Activated CD4-positive, alpha-beta T cell treated with anti-CD3 and anti-CD28 coated beads for 36 hours (primary cell): ENCODE measurements at regions of chr10 and their contacts with region 1.

Region 1: DNA sequence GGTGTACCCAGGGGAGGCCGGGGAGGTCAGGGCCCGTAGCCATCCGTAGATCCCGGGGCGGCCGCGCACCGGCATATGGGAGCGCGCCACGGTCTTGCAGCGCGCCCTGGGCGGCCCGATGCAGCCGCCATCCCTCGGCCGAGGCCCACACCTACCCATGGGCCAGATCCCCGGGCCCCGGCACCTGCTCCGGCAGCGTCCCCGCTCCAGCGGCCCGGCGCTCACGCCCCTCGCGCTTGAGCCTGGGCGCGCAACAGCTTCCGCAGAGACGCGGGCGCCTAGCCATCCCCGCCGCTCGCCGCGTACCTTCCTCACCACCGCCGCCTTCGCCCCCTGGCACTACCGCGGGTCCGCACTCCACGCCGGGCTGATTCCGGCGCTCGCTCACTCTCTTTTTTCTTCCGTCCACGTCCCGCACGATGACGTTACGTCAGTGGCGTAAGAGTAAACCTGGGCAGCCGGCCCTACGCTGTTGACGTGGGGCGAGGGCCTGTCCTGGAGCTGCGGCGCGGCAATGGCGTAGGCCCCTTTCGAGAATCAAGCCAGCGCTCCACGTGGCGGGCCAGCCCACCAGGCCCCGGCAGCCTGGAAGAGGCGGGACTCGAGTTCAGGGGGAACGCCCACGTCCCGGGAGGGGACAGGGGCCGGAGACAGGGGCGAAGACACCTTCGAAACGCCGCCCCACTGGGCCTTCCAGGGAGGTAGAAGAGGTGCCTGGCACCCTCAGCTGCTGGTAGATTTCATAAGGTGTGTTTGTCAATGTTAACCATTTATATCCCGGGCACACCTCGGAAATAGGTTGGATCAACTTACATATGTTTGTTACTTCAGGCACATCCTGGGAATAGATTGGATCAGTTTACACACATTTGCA is at the start of gene ALDH18A1:
- DNase-seq: peak; percentile 93
- ATAC-seq: peak; percentile 91
- H3K4me3 Mint-ChIP-seq: peak within 1 kb of the TSS; percentile 94
- H3K27ac Mint-ChIP-seq: peak within 1 kb of the TSS; percentile 99
- H3K4me1 Mint-ChIP-seq: peaks cover 26% of the 10 kb centered on the region
- H3K27me3 Mint-ChIP-seq: no peaks in the 10 kb centered on the region
- total RNA-seq, gene ALDH18A1: 117 to 120 TPM

Region 2: GRCh38 chr10:94607111-94607510 is 1049.4 kb before region 1 on chr10:
- CTCF ChIA-PET with region 1: no interaction called
- POLR2A ChIA-PET with region 1: no interaction called
- intact Hi-C with region 1: loop called in 1 of 2 experiments (anchors 5 kb)
- DNase-seq: no peak
- ATAC-seq: peak; percentile 93
- H3K4me3 Mint-ChIP-seq: no peak overlapping the region
- H3K27ac Mint-ChIP-seq: peak overlapping the region; percentile 72
- H3K4me1 Mint-ChIP-seq: peaks cover 24% of the 10 kb centered on the region
- H3K27me3 Mint-ChIP-seq: no peaks in the 10 kb centered on the region

Region 3: DNA sequence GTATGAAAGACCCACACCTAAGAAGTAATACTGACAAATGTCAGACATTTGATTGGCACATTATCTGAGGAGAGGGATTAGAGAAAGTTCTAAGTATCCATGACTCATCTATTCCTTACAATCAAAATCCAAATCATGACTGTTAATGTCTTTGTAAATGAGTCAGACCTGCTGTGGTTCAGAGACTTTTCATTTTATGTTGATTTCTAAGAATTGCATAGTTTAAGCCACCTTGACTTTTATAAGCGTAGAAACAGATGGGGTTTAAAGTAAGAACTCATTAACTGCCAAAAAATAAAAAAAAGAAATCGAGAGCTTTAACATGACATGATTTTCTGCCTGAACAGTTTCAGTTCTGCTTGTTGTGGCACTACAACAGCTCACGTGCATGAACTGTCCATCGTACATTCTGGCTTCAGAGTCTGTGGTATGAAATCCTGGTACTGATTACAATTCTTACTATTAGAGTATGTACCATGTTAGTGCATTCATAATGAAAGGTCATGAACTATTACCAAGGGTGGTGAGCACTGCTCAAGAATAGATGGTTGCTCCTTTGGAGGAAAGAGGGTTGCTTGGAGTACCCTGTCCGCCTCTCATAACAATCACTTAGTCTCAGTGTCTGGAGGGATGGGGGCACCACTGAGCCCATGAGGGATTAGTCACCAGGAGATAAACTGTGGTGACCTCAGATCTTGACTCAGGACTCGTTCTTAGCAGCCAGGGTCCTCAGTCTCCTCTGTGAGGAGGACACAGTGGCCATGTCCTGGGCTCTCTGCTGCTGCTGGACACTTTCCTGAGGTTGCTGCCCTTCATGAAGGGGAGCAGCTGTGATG is 420.2 kb before region 1 on chr10:
- CTCF ChIA-PET with region 1: no interaction called
- POLR2A ChIA-PET with region 1: no interaction called
- intact Hi-C with region 1: loop called in 1 of 2 experiments (anchors 1 kb)
- DNase-seq: peak; percentile 56
- ATAC-seq: peak; percentile 87
- H3K4me3 Mint-ChIP-seq: peak overlapping the region; percentile 19
- H3K27ac Mint-ChIP-seq: peak overlapping the region; percentile 85
- H3K4me1 Mint-ChIP-seq: peaks cover 29% of the 10 kb centered on the region
- H3K27me3 Mint-ChIP-seq: peaks cover 15% of the 10 kb centered on the region

Region 4: GRCh38 chr10:95561182-95562075 is 95.1 kb before region 1 on chr10 and contains the start of gene SORBS1:
- CTCF ChIA-PET with region 1: no interaction called
- POLR2A ChIA-PET with region 1: no interaction called
- intact Hi-C with region 1: loop called (anchors 1 kb)
- DNase-seq: peak; percentile 91
- ATAC-seq: peak; percentile 99
- H3K4me3 Mint-ChIP-seq: peak within 1 kb of the TSS; percentile 85
- H3K27ac Mint-ChIP-seq: no peak within 1 kb of the TSS
- H3K4me1 Mint-ChIP-seq: peaks cover 9% of the 10 kb centered on the region
- H3K27me3 Mint-ChIP-seq: peaks cover 6% of the 10 kb centered on the region
- total RNA-seq, gene SORBS1: 0.69 to 1.0 TPM

Region 5: GRCh38 chr10:95628786-95629185 is 27.7 kb before region 1 on chr10:
- CTCF ChIA-PET with region 1: no interaction called
- POLR2A ChIA-PET with region 1: no interaction called
- intact Hi-C with region 1: no loop called
- DNase-seq: no peak
- ATAC-seq: no peak
- H3K4me3 Mint-ChIP-seq: no peak overlapping the region
- H3K27ac Mint-ChIP-seq: no peak overlapping the region
- H3K4me1 Mint-ChIP-seq: no peaks in the 10 kb centered on the region
- H3K27me3 Mint-ChIP-seq: no peaks in the 10 kb centered on the region

Region 6: GRCh38 chr10:95907456-95908253 is 251.1 kb after region 1 on chr10 and contains the start of gene CC2D2B:
- CTCF ChIA-PET with region 1: no interaction called
- POLR2A ChIA-PET with region 1: no interaction called
- intact Hi-C with region 1: loop called in 1 of 2 experiments (anchors 1 kb)
- DNase-seq: peak; percentile 85
- ATAC-seq: peak; percentile 94
- H3K4me3 Mint-ChIP-seq: peak within 1 kb of the TSS; percentile 88
- H3K27ac Mint-ChIP-seq: peak within 1 kb of the TSS; percentile 96
- H3K4me1 Mint-ChIP-seq: peaks cover 9% of the 10 kb centered on the region
- H3K27me3 Mint-ChIP-seq: peaks cover 2% of the 10 kb centered on the region
- total RNA-seq, gene CC2D2B: 0.23 TPM in 1 of 2 experiments, not detected in the other